Ascending aorta (tissue), 2 donors: ENCODE measurements at regions of chr3 and their contacts with region 1.

Region 1: GRCh38 chr3:48739955-48740823 is 23.2 kb upstream of the IP6K2 start:
- DNase-seq: peak; percentile 47 to 92
- H3K4me3 ChIP-seq: peak overlapping the region in 1 of 2 donors; percentile 27
- H3K27ac ChIP-seq: peak overlapping the region; percentile 73 to 77
- H3K4me1 ChIP-seq: peaks cover 7 to 10% of the 10 kb centered on the region in 2 donors
- H3K27me3 ChIP-seq: no peaks in the 10 kb centered on the region
- CTCF ChIP-seq: peak; percentile 84 to 90 (median 89)

Region 2: GRCh38 chr3:48692551-48692950 is 47.6 kb before region 1 on chr3:
- intact Hi-C with region 1: no loop called
- DNase-seq: no peak
- H3K4me3 ChIP-seq: no peak overlapping the region
- H3K27ac ChIP-seq: peak overlapping the region; percentile 93 to 96
- H3K4me1 ChIP-seq: peaks cover 9 to 23% of the 10 kb centered on the region in 2 donors
- H3K27me3 ChIP-seq: no peaks in the 10 kb centered on the region
- CTCF ChIP-seq: no peak

Region 3: GRCh38 chr3:48708481-48708889 is 31.7 kb before region 1 on chr3:
- intact Hi-C with region 1: loop called (anchors 5 kb)
- DNase-seq: no peak
- H3K4me3 ChIP-seq: no peak overlapping the region
- H3K27ac ChIP-seq: peak overlapping the region; percentile 37 to 48
- H3K4me1 ChIP-seq: peaks cover 0 to 13% of the 10 kb centered on the region in 2 donors
- H3K27me3 ChIP-seq: no peaks in the 10 kb centered on the region
- CTCF ChIP-seq: no peak

Region 4: DNA sequence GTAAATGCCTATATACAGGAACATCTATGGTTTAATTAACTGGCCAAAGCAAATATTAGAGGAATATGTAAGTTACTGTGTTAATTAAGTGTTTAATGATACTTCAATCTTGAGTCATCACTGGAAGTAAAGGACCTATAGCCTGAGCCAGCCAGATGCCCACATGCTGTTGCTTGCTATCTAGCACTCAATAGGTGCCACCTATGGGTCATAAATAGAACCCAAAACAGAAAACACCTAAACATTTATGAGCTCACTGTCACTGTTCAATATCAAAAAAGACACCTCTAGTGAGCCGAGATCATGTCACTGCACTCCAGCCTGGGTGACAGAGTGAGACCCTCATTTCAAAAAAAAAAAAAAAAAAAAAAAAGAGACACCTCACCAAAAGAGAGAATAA is 25.2 kb after region 1 on chr3:
- intact Hi-C with region 1: no loop called
- DNase-seq: no peak
- H3K4me3 ChIP-seq: no peak overlapping the region
- H3K27ac ChIP-seq: no peak overlapping the region
- H3K4me1 ChIP-seq: no peaks in the 10 kb centered on the region
- H3K27me3 ChIP-seq: no peaks in the 10 kb centered on the region
- CTCF ChIP-seq: no peak